ENCODE measurements at regions of chr9 and their contacts with region 1.

Region 1: GRCh38 chr9:126985870-126986498 is 71.4 kb downstream of the RALGPS1 start:
- DNase-seq: peak; percentile 92
- ATAC-seq: peak; percentile 91
- H3K4me3 ChIP-seq: no peak overlapping the region
- H3K27ac ChIP-seq: peak overlapping the region; percentile 29
- H3K4me1 ChIP-seq: peaks cover 14% of the 10 kb centered on the region
- H3K27me3 ChIP-seq: no peaks in the 10 kb centered on the region
- CTCF ChIP-seq: peak in 1 of 3 experiments; percentile 19; a peak in 3 of 6 replicates
- EP300 ChIP-seq: peak; percentile 77 to 94; a peak in 3 of 4 replicates
- POLR2A ChIP-seq: no peak
- RAD21 ChIP-seq: peak; percentile 50

Region 2: GRCh38 chr9:126975327-126976220 is 10.4 kb before region 1 on chr9:
- CTCF ChIA-PET with region 1: interaction called, 9 read pairs
- POLR2A ChIA-PET with region 1: interaction called, 3 read pairs
- RAD21 ChIA-PET with region 1: interaction called, 12 read pairs
- SMC1A ChIA-PET with region 1: interaction called, 23 read pairs
- in situ Hi-C with region 1: no loop called
- intact Hi-C with region 1: no loop called
- DNase-seq: no peak
- ATAC-seq: no peak
- H3K4me3 ChIP-seq: no peak overlapping the region
- H3K27ac ChIP-seq: no peak overlapping the region
- H3K4me1 ChIP-seq: peaks cover 5% of the 10 kb centered on the region; the same call in 1 of the 2 replicates
- H3K27me3 ChIP-seq: no peaks in the 10 kb centered on the region
- CTCF ChIP-seq: no peak
- EP300 ChIP-seq: no peak
- POLR2A ChIP-seq: no peak
- RAD21 ChIP-seq: no peak

Region 3: DNA sequence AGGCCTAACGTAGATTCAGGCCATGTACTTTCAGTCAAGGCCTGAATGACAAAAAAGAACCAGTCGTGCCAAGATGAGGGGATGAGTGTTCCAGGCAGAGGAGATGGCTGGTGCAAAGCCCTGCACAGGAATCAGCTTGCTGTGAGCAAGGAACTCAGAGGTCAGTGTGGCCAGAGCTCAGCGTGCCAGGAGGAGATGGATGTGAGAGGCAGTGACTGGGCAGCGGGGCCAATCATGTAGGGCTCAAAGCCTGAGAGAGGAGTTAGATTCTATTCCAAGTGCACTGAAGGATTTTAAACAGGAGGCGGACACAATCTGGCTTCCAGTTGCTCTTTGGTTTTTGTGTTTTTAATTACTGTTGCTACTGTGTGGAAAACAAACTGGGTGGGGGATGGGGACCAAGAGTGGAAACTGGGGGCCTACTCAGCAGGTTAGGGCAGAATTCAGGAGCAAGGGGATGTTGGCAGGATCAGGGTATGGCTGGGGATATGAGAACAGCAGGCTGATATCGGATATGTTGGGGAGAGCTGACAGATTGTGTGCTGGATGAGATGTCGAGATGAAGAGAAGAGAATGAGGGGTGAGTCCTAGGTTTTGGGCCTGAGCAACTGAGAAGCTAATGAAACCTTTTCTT is 72.1 kb after region 1 on chr9:
- CTCF ChIA-PET with region 1: interaction called, 8 read pairs
- POLR2A ChIA-PET with region 1: interaction called, 13 read pairs
- RAD21 ChIA-PET with region 1: interaction called, 42 read pairs
- SMC1A ChIA-PET with region 1: interaction called, 24 read pairs
- in situ Hi-C with region 1: no loop called
- intact Hi-C with region 1: no loop called
- DNase-seq: no peak
- ATAC-seq: no peak
- H3K4me3 ChIP-seq: no peak overlapping the region
- H3K27ac ChIP-seq: no peak overlapping the region
- H3K4me1 ChIP-seq: peaks cover 5% of the 10 kb centered on the region
- H3K27me3 ChIP-seq: no peaks in the 10 kb centered on the region
- CTCF ChIP-seq: no peak
- EP300 ChIP-seq: no peak
- POLR2A ChIP-seq: no peak
- RAD21 ChIP-seq: no peak

Region 4: DNA sequence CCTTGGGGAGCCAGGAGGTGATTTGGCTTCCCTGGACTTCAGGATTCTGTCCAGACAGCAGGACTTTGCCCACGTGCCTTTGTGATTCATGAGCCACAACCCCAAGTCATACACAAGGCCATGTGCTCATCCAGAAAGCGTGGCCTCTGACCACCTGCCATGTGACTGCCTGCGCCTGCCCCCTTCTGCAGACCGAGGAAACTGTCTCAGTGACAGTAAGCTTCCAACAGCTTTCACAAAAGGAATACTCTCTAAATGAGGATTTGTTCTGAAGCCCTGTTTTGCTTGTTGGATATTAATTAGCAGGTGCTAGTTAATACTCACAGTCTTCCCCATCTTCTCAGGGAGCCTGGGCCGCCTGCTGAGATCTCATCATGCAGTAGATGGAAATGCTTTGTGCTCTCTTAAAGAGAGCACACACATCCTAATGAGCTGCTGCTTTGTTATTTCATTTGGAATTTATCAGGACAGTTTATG is 173.4 kb after region 1 on chr9:
- CTCF ChIA-PET with region 1: interaction called, 4 read pairs
- POLR2A ChIA-PET with region 1: interaction called, 5 read pairs
- RAD21 ChIA-PET with region 1: interaction called, 111 read pairs
- SMC1A ChIA-PET with region 1: interaction called, 96 read pairs
- in situ Hi-C with region 1: no loop called
- intact Hi-C with region 1: no loop called
- DNase-seq: no peak
- ATAC-seq: peak; percentile 30; the same call in 2 of the 3 replicates
- H3K4me3 ChIP-seq: no peak overlapping the region
- H3K27ac ChIP-seq: no peak overlapping the region
- H3K4me1 ChIP-seq: peaks cover 27% of the 10 kb centered on the region
- H3K27me3 ChIP-seq: no peaks in the 10 kb centered on the region
- CTCF ChIP-seq: peak in 1 of 3 experiments; percentile 16; a peak in 1 of 6 replicates
- EP300 ChIP-seq: no peak
- POLR2A ChIP-seq: no peak
- RAD21 ChIP-seq: no peak; the same call in 1 of the 2 replicates

Region 5: DNA sequence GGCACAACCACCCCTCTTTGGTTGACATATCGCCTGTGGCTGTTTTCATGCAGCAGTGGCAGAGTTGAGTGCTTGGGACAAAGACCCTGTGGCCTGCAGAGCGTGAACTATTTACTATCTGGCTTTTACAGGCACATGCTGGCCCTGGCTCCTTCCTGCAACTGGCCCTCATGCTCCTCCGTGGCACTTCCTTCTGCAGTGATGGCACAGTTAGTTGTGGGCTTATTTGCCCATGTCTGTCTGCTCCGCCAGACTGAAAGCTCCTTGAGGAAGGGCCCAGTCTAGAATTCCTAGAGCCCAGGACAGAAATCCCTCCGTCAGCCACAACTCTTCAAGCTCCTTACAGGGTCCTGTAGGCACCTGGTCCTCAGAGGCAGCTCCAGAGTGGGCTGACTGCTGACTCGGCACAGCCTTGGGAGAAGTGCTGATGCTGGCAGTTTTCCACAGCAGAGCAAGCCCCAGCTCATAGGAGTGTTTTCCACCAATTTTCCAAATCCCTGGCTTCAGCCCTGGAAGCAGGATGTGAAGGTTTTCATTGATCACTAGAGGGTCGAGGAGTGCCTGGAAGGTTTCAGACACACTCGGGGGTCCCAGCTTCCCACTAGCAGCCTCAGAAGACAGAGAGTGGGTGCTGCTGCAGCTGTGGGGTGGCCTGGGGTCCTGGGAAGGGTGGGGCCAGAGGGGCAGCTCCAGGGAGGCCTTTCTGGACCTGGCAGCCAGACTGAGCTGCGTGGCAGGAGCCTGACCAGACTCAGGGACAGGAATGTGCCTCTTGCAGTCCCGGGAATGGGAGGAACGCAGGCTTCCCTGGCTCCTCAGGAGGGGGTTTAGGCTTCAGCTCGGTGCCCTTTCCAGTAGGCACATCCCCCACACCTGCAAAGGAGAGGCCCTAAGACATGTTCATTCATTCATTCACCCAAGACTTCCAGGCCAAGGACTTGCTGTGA is 193.0 kb after region 1 on chr9:
- CTCF ChIA-PET with region 1: interaction called, 8 read pairs
- POLR2A ChIA-PET with region 1: interaction called, 13 read pairs
- RAD21 ChIA-PET with region 1: interaction called, 23 read pairs
- SMC1A ChIA-PET with region 1: interaction called, 17 read pairs
- in situ Hi-C with region 1: no loop called
- intact Hi-C with region 1: no loop called
- DNase-seq: no peak
- ATAC-seq: no peak
- H3K4me3 ChIP-seq: no peak overlapping the region
- H3K27ac ChIP-seq: no peak overlapping the region
- H3K4me1 ChIP-seq: peaks cover 18% of the 10 kb centered on the region
- H3K27me3 ChIP-seq: no peaks in the 10 kb centered on the region
- CTCF ChIP-seq: no peak
- EP300 ChIP-seq: no peak
- POLR2A ChIP-seq: no peak
- RAD21 ChIP-seq: no peak